GM23248 (cell line): ENCODE measurements at regions of chr2 and their contacts with region 1.

Region 1: GRCh38 chr2:130807659-130808385 is 28.9 kb upstream of the ARHGEF4 start:
- DNase-seq: peak; percentile 24
- H3K4me3 ChIP-seq: no peak overlapping the region
- H3K27ac ChIP-seq: no peak overlapping the region
- H3K4me1 ChIP-seq: no peaks in the 10 kb centered on the region
- H3K27me3 ChIP-seq: no peaks in the 10 kb centered on the region; the same call in 1 of the 2 replicates

Region 2: GRCh38 chr2:130873700-130874346 is 66.0 kb after region 1 on chr2:
- in situ Hi-C with region 1: loop called (anchors 10 kb)
- DNase-seq: peak; percentile 79
- H3K4me3 ChIP-seq: no peak overlapping the region
- H3K27ac ChIP-seq: no peak overlapping the region
- H3K4me1 ChIP-seq: no peaks in the 10 kb centered on the region
- H3K27me3 ChIP-seq: no peaks in the 10 kb centered on the region; the same call in none of the 2 replicates